ENCODE measurements at regions of chr1 and their contacts with region 1.

Region 1: GRCh38 chr1:113978863-113979702 is at the start of gene OLFML3:
- DNase-seq: no peak
- H3K4me3 Mint-ChIP-seq: no peak within 1 kb of the TSS
- H3K27ac Mint-ChIP-seq: peak within 1 kb of the TSS; percentile 32
- H3K4me1 Mint-ChIP-seq: peaks cover 39% of the 10 kb centered on the region
- H3K27me3 Mint-ChIP-seq: no peaks in the 10 kb centered on the region
- total RNA-seq, gene OLFML3: 0.11 and 0.18 TPM in 2 replicates

Region 2: GRCh38 chr1:114282751-114283403 is 303.8 kb after region 1 on chr1:
- intact Hi-C with region 1: loop called (anchors 1 kb)
- DNase-seq: peak; percentile 67
- H3K4me3 Mint-ChIP-seq: no peak overlapping the region
- H3K27ac Mint-ChIP-seq: no peak overlapping the region
- H3K4me1 Mint-ChIP-seq: peaks cover 3% of the 10 kb centered on the region
- H3K27me3 Mint-ChIP-seq: peaks cover 21% of the 10 kb centered on the region